ENCODE measurements at regions of chr5 and their contacts with region 1.

Region 1: DNA sequence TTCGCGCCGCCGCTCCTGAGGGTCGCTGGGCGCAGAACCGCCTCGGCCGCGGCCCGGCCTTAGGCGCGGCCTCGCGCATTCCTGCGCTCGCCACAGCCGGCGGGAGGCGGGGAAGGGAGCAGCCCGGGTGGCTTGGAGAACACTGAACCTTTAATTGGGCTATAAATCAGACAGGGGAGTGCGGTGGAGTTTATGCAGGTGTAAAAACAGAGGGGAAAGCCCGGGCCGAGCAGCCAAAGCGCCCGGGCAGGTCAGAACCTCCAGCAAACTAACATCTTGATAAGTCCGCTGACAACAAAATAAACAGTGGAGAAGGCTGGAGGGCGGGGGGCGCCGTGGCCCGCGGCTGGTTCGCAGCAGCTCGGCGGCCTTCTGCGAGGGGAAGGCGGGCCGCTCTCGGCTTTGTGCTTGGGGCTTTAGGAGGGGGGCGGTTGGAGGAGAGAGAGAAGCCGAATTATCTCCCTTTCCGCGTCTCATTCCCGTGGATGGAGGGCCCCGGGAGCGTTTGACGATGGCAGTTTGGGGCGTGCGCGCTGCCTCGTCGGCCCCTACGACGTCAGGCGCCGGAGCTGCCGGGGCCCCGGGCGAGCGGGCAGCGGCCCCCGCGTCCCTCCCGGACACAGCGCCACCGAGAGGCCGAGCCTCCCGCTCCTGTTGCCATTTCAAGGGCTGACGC is 11.3 kb downstream of the FOXD1 start:
- DNase-seq: peak; percentile 51
- ATAC-seq: no peak
- H3K4me3 ChIP-seq: peak overlapping the region in 3 of 5 experiments; percentile 18 to 30 (median 26)
- H3K4me3 Mint-ChIP-seq: peak overlapping the region; percentile 59
- H3K27ac ChIP-seq: no peak overlapping the region
- H3K27ac Mint-ChIP-seq: no peak overlapping the region
- H3K4me1 ChIP-seq: peaks cover 10 to 33% of the 10 kb centered on the region in 2 donors
- H3K4me1 Mint-ChIP-seq: peaks cover 14% of the 10 kb centered on the region
- H3K27me3 ChIP-seq: peaks cover 5 to 76% (median 67%) of the 10 kb centered on the region in 4 experiments
- H3K27me3 Mint-ChIP-seq: peaks cover 82% of the 10 kb centered on the region
- CTCF ChIP-seq: no peak

Region 2: GRCh38 chr5:73448463-73449136 is 11.4 kb after region 1 on chr5 and contains the start of gene FOXD1:
- CTCF ChIA-PET with region 1: interaction called, 10 read pairs
- POLR2A ChIA-PET with region 1: no interaction called
- intact Hi-C with region 1: loop called (anchors 2 kb)
- DNase-seq: peak; percentile 74
- ATAC-seq: peak; percentile 56
- H3K4me3 ChIP-seq: peak within 1 kb of the TSS; percentile 26 to 61 (median 55)
- H3K4me3 Mint-ChIP-seq: peak within 1 kb of the TSS; percentile 94
- H3K27ac ChIP-seq: no peak within 1 kb of the TSS
- H3K27ac Mint-ChIP-seq: peak within 1 kb of the TSS; percentile 79
- H3K4me1 ChIP-seq: peaks cover 25 to 60% of the 10 kb centered on the region in 2 donors
- H3K4me1 Mint-ChIP-seq: peaks cover 22% of the 10 kb centered on the region
- H3K27me3 ChIP-seq: peaks cover 9 to 85% (median 72%) of the 10 kb centered on the region in 4 experiments
- H3K27me3 Mint-ChIP-seq: peaks cover 61% of the 10 kb centered on the region
- CTCF ChIP-seq: no peak
- total RNA-seq, gene FOXD1: 0.44 and 0.49 TPM in 2 replicates

Region 3: GRCh38 chr5:73729329-73729728 is 292.1 kb after region 1 on chr5:
- CTCF ChIA-PET with region 1: no interaction called
- POLR2A ChIA-PET with region 1: no interaction called
- intact Hi-C with region 1: no loop called
- DNase-seq: no peak
- ATAC-seq: no peak
- H3K4me3 ChIP-seq: no peak overlapping the region
- H3K4me3 Mint-ChIP-seq: no peak overlapping the region
- H3K27ac ChIP-seq: no peak overlapping the region
- H3K27ac Mint-ChIP-seq: no peak overlapping the region
- H3K4me1 ChIP-seq: no peaks in the 10 kb centered on the region
- H3K4me1 Mint-ChIP-seq: no peaks in the 10 kb centered on the region
- H3K27me3 ChIP-seq: no peaks in the 10 kb centered on the region
- H3K27me3 Mint-ChIP-seq: peaks cover 8% of the 10 kb centered on the region
- CTCF ChIP-seq: no peak

Measured in B cell (primary cell).